ENCODE measurements at regions of chr7 and their contacts with region 1.

Region 1: DNA sequence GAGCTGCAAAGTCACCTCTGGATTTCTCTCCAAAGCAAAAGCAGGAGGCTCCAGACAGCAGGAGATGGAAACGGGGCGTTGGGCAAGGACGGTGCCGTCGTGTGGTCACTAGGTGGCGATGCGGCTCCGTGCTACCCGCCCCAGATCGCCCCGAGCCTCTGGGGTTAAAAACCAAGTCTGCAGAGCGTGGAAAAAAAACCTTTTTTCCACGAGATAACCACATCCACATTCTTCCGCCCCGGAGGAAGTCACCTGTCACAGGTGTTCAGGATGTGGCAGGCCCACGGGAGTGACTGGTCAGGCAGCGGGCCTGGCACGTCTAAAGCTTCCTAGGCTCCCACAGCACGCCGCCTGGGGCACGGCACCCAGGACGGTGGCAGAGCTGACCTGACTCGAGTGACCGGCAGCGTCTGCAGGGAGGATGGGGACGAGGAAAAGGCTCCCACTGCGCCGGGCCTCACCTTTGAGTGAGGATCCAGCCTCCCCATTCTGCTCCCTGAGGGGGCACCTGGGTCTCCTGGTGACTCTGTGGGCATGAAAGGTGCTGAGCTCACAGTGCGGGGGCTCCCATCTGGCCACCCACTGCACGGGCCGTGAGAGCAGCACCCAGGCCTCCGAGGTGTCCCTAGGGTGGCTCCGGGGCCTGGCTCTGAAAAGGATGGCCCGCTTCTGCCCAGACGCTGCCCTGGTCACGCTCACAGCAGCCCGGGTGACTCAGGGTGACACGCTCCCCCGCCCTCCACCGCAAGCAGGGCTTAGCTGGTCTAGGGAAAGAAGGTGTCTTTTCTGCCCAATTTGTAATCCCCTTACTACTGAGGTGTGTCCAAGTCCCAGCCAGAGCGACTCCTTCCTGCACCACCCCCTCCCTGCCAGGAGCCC is 71.3 kb upstream of the TNRC18 start:
- DNase-seq: peak; percentile 70
- H3K4me3 Mint-ChIP-seq: no peak overlapping the region
- H3K27ac Mint-ChIP-seq: no peak overlapping the region
- H3K4me1 Mint-ChIP-seq: peaks cover 17% of the 10 kb centered on the region
- H3K27me3 Mint-ChIP-seq: no peaks in the 10 kb centered on the region

Region 2: DNA sequence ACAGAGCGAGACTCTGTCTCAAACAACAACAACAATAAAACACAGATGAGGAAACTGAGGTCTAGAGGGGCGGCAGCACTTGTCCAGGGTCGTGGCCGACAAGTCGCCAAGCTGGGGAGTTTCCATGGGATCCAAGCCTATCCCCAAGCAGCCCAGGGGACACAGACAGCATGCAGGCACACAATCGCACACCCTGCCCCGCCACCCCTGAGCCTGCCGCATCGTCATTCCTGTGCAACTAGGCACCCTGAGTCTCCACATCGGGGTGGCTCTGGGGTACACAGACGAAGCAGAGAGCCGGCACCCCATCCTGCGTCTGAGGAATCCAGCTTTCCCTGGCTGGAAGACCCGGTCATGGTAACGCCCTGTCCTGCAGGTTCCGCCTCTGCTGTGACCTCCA is 64.7 kb after region 1 on chr7:
- intact Hi-C with region 1: loop called (anchors 1 kb)
- DNase-seq: no peak
- H3K4me3 Mint-ChIP-seq: no peak overlapping the region
- H3K27ac Mint-ChIP-seq: no peak overlapping the region
- H3K4me1 Mint-ChIP-seq: peaks cover 41% of the 10 kb centered on the region
- H3K27me3 Mint-ChIP-seq: peaks cover 19% of the 10 kb centered on the region

Measured in activated T-helper 2 cell treated with anti-CD3 and anti-CD28 coated beads, Interferon-gamma antibody, Interleukin-2, Interleukin-4, amounts not matched to agents 10 μg/mL and 5 μg/mL and 100 μg/mL, durations not matched to agents 14 hours and 24 hours and 36 hours (primary cell).